ENCODE measurements at regions of chr2 and their contacts with region 1.

Region 1: DNA sequence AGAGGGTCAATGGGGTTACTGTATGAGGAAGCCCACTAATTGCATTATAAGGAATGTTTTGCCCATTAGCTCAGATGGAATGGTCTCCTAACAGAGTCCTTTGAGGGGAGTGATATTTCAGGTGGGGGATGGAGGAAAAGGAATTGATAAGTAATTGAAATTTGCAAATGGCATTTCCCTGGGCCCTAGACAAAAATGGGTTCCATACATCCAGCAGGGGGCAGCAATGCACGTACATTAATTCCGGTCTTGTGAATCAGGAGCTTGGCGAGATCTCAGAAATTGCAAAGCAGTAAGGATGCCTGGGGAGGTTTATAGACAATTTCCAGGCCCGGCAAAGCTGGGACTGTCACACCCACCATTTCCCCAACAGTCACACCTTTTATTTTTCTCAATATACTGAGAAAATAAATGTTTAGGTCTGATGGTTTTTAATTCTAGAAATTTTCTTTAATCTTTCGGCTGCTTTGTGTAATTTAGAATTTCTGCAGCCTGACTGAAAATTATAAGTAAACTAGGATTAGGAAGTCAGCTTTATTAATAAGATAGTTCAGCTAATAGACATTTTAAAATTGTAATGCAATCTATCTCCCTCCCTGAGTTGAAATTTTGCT is 122.8 kb downstream of the LYPD1 start:
- DNase-seq: peak; percentile 56
- H3K4me3 ChIP-seq: no peak overlapping the region
- H3K27ac ChIP-seq: no peak overlapping the region
- H3K4me1 ChIP-seq: peaks cover 11% of the 10 kb centered on the region
- H3K27me3 ChIP-seq: no peaks in the 10 kb centered on the region
- CTCF ChIP-seq: peak; percentile 55 to 71

Region 2: GRCh38 chr2:131816831-131817230 is 730.4 kb before region 1 on chr2:
- CTCF ChIA-PET with region 1: no interaction called
- dilution Hi-C with region 1: no loop called
- in situ Hi-C with region 1: no loop called
- intact Hi-C with region 1: no loop called
- DNase-seq: no peak
- H3K4me3 ChIP-seq: no peak overlapping the region
- H3K27ac ChIP-seq: no peak overlapping the region
- H3K4me1 ChIP-seq: no peaks in the 10 kb centered on the region
- H3K27me3 ChIP-seq: no peaks in the 10 kb centered on the region
- CTCF ChIP-seq: no peak

Region 3: DNA sequence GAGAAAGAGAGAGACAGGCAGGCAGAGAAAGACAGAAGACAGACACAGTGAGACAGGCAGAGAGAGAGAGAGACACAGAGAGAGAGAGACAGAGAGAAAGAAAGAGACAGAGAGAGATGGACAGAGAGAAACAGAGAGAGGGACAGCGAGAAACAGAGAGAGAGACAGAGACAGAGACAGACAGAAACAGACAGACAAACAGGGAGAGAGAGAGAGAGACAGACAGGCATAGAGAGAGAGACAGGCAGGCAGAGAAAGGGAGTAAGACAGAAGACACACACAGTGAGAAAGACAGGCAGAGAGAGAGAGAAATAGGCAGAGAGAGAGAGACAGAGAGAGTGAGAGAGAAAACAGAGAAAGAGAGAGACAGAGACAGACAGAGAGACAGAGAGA is 280.1 kb before region 1 on chr2:
- CTCF ChIA-PET with region 1: no interaction called
- dilution Hi-C with region 1: no loop called
- in situ Hi-C with region 1: no loop called
- intact Hi-C with region 1: loop called (anchors 5 kb)
- DNase-seq: no peak
- H3K4me3 ChIP-seq: no peak overlapping the region
- H3K27ac ChIP-seq: no peak overlapping the region
- H3K4me1 ChIP-seq: peaks cover 4% of the 10 kb centered on the region
- H3K27me3 ChIP-seq: no peaks in the 10 kb centered on the region
- CTCF ChIP-seq: no peak

Region 4: GRCh38 chr2:132651115-132652045 is 104.2 kb after region 1 on chr2:
- CTCF ChIA-PET with region 1: no interaction called
- dilution Hi-C with region 1: no loop called
- in situ Hi-C with region 1: no loop called
- intact Hi-C with region 1: loop called (anchors 5 kb)
- DNase-seq: no peak
- H3K4me3 ChIP-seq: no peak overlapping the region
- H3K27ac ChIP-seq: no peak overlapping the region
- H3K4me1 ChIP-seq: no peaks in the 10 kb centered on the region
- H3K27me3 ChIP-seq: no peaks in the 10 kb centered on the region
- CTCF ChIP-seq: no peak

Region 5: DNA sequence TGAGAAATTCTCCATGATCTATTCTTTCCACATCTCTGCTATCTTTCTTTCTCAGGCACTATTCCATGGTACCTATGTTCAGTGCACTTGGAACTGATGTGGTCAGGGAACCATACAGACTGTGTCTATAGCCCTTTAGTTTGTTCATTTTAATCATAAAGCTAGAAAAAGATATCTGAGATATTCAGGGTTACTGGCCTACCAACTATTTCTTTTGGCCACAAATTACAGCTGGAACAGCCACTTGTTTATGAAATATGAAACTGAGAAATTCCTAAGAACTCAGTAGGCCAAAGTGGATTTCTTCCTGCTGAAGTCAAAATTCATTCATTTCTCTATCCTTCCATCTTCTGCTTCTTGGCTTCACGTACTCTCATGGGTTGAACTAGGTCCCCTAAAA is 145.6 kb after region 1 on chr2:
- CTCF ChIA-PET with region 1: no interaction called
- dilution Hi-C with region 1: no loop called
- in situ Hi-C with region 1: no loop called
- intact Hi-C with region 1: no loop called
- DNase-seq: no peak
- H3K4me3 ChIP-seq: no peak overlapping the region
- H3K27ac ChIP-seq: no peak overlapping the region
- H3K4me1 ChIP-seq: no peaks in the 10 kb centered on the region
- H3K27me3 ChIP-seq: peaks cover 2% of the 10 kb centered on the region
- CTCF ChIP-seq: no peak

Region 6: GRCh38 chr2:133171393-133172004 is 624.3 kb after region 1 on chr2:
- CTCF ChIA-PET with region 1: interaction called, 9 read pairs
- dilution Hi-C with region 1: no loop called
- in situ Hi-C with region 1: loop called (anchors 10 kb)
- intact Hi-C with region 1: loop called (anchors 1 kb)
- DNase-seq: peak; percentile 53
- H3K4me3 ChIP-seq: no peak overlapping the region
- H3K27ac ChIP-seq: no peak overlapping the region
- H3K4me1 ChIP-seq: no peaks in the 10 kb centered on the region
- H3K27me3 ChIP-seq: no peaks in the 10 kb centered on the region
- CTCF ChIP-seq: peak; percentile 62 to 65

Region 7: DNA sequence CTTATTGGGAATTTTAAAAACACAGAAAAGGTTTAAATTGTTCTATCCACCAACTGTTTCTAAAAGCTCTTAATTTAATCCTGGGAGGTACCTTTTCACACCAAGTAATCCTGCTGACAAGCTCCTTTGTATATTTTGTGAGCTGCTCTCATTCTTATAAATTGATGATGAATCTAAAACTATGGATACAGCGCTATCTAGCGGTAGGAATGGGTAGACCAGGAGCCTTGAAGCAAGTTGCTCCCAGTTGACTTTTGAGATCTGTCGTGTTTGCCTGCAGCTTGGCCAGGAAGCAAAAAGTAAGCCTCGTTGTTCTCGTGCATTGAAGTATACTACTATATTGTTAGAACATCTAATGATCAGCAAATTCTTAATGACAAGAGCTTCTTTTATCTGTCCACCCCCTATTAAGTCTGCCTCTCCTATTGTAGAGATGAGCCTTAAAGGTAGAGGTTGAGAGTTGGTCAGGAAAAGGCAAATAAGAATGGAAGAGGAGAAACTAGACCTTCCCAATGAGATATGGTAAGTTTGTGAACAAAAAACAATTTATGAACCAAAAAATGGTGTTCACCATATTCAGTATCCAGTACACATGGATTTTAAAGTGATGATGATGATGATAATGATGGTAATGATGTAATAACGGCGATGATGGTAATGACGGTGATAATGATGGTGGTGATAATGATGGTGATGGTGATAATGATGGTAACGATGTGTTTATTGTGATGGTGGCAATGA is 1233.1 kb after region 1 on chr2:
- CTCF ChIA-PET with region 1: no interaction called
- dilution Hi-C with region 1: no loop called
- in situ Hi-C with region 1: no loop called
- intact Hi-C with region 1: loop called (anchors 1 kb)
- DNase-seq: peak; percentile 70
- H3K4me3 ChIP-seq: no peak overlapping the region
- H3K27ac ChIP-seq: no peak overlapping the region
- H3K4me1 ChIP-seq: no peaks in the 10 kb centered on the region
- H3K27me3 ChIP-seq: no peaks in the 10 kb centered on the region
- CTCF ChIP-seq: peak; percentile 81